AG04449 (cell line): ENCODE measurements at regions of chr1 and their contacts with region 1.

Region 1: GRCh38 chr1:68442822-68443556 is 6.8 kb downstream of the RPE65 start:
- DNase-seq: peak; percentile 9
- H3K4me3 ChIP-seq: no peak overlapping the region
- CTCF ChIP-seq: peak; percentile 61

Region 2: DNA sequence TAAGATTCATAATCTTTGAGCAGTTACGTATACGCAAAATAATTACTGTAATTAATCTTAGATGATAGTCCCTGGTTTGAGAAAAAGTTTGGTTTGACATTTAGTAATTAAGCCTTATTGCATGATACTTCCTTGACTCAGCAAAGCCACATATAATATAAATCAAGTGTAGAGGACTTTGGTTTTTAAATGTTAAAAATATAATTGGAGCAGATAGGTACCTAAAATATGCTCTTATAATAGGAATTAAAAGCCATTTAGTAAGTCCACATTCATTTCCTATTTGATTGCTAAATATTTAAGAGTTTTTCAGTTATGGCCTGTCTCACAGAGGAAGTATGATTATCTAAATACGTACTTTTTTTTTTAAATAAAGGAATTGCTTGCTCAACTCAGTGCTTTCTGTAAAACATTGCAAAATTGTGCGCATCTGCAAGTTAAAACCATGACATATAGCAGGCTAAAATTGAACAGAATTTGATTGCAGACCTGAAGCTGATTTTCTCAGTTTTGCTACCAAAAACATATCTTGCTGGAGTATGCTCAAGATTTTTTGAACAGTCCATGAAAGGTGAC is 13.7 kb before region 1 on chr1:
- CTCF ChIA-PET with region 1: interaction called, 40 read pairs
- POLR2A ChIA-PET with region 1: no interaction called
- DNase-seq: no peak
- H3K4me3 ChIP-seq: no peak overlapping the region
- CTCF ChIP-seq: no peak

Region 3: DNA sequence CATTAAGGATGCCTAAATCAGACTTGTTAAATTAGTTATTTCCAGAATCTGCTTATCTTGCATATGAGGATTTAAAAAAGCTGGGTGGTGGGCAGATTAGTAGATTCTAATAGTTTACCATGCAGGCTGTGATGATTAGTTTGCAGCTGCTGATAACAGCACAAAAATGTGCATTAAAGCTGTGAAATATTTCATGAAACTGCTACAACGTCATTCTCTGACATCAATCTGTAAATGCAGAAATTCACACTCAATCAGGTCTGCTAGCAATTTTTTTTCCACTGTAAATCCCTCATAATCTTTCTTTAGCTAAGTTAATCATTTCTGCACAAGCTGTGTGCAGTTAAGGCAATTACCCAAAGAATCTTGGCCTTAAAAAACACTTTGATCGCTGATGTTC is 16.1 kb after region 1 on chr1:
- CTCF ChIA-PET with region 1: interaction called, 16 read pairs
- POLR2A ChIA-PET with region 1: no interaction called
- DNase-seq: no peak
- H3K4me3 ChIP-seq: no peak overlapping the region
- CTCF ChIP-seq: no peak

Region 4: DNA sequence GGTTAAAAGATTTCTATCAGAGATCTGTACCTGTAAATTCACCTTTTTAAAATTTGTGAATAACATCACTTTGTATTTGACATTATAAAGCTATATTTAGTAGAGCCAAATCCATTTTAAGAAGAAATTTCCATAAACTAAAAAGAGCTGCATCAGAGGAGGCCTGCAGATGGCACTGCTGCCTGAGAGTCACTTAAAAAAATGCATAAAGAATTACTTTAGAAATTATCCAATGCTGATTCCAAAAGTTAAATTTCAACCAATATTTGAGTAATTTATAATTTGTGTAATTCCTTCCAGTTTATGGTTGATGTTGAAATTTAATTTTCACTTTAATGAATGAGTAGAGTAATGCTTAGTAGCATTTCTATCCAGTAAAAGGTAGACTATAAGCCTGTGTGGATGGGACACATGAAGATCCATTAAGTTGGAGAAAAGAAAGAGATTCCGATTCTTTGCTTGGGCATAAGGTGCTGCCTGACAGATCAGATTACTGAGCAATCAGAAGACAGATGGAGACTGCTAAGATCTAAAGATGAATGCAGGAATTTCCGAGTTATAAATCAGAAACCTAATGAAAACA is 27.5 kb after region 1 on chr1:
- CTCF ChIA-PET with region 1: interaction called, 14 read pairs
- POLR2A ChIA-PET with region 1: no interaction called
- DNase-seq: no peak
- H3K4me3 ChIP-seq: no peak overlapping the region
- CTCF ChIP-seq: peak; percentile 38

Region 5: DNA sequence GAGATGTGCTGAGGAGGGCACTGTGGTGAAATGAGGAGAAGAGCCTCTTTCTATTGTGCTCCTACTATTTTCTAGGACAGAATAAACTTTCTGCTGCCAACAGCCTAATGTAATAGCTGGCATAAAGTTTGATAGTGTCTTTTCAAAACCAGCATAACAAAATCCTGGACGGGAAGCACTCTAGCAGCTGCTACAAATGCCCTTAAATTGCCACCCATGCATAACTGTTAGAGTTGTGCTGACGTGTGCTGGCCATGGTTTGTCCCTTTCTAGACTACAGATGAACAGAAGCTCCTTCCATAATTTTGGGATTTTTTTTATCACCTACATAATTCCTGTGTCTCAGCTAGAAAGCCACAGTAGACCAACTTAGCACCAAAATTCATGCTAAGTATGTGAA is 142.4 kb after region 1 on chr1:
- CTCF ChIA-PET with region 1: no interaction called
- POLR2A ChIA-PET with region 1: no interaction called
- DNase-seq: no peak
- H3K4me3 ChIP-seq: no peak overlapping the region
- CTCF ChIP-seq: no peak